GM18951 (cell line): ENCODE measurements at regions of chr16 and their contacts with region 1.

Region 1: GRCh38 chr16:56950881-56951771 is 10.6 kb upstream of the CETP start:
- POLR2A ChIP-seq: no peak

Region 2: DNA sequence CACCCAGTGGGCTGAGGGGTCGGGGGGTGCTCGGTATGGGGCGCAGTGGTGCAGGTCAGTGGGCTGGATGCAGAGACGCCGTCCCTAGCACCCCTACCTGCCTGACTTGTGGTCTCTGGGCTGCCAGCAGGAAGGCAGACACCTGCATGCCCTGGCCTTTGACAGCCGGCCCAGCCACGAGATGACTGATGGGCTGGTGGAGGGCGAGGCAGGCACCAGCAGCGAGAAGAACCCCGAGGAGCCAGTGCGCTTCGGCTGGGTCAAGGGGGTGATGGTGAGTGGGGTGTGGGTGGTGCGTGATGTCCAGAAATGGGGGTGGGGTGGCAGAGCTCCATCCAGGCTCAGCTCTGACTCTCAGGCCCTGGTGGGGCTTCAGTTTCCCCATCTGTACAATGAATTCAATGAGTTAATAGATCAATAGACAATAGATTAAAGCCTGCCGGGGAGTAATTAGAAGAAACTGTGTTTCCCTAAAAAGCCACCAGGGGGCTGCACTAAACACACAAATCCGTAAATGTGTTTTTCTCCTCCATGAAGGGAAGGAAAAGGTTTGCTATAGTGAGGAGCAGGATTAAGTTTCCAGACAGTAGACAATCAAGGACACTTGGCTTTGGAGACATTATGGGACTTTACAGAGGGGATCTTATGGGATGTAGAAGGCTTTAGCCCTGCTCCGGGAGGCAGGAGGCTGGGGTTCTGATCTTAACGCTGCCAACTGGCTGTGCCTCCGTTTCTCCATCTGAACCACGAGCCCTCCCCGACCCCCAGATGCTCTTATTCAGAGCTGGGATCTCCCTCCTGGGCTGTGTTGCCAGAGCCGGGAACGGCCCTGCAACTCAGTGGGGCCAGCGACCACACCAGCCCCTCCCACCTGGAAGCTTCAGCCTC is 83.9 kb before region 1 on chr16:
- in situ Hi-C with region 1: loop called (anchors 5 kb)
- POLR2A ChIP-seq: no peak